Activated CD4-positive, alpha-beta T cell treated with anti-CD3 and anti-CD28 coated beads, Interleukin-2, amount 10 ng/mL, durations not matched to agents 7 days and 5 days (primary cell): ENCODE measurements at regions of chr19 and their contacts with region 1.

Region 1: DNA sequence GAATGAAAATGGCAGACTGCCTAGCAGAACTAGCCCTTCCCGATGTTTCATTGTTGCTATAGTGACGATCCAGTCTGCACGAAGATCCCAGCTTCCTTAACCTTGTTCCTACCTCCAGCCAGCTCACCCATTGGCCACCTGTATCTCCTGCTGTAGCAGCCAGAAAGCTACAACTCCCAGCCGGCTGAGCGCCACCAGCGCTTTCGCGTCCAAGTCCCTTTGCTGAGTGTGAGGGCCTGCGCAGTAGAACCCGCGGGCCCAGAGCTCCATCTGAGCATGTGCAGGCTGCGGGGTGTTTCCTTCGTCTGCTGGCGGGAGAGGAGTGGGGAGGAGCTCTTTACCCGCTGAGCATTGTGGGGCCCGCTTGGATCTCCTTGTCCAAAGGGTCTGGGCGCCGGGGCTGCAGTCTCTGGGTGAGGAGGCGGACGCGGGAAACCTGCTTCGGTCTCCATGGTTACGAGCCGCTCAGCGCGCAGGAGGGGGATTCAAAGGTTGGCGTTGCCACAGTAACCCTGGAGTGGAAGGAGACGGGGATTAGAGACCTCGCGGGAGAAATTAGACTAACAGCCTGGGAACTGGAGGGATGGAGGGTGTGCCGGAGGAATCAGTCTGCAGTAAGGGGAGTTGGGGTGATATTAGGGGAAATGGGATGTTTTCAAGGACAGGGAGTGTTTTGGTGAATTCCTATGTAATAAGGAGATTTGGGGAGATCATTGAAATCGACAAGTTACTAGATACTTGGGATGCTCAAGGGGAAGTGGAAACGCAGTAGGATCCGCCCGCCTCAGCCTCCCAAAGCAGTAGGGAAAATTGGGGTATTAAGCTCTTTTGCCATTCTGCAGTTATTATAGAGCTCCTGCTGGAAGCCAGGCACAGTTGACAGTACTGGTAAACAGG is 33.5 kb downstream of the ZSWIM9 start:
- DNase-seq: peak; percentile 95
- H3K4me3 Mint-ChIP-seq: no peak overlapping the region
- H3K27ac Mint-ChIP-seq: no peak overlapping the region
- H3K4me1 Mint-ChIP-seq: peaks cover 29% of the 10 kb centered on the region
- H3K27me3 Mint-ChIP-seq: no peaks in the 10 kb centered on the region

Region 2: DNA sequence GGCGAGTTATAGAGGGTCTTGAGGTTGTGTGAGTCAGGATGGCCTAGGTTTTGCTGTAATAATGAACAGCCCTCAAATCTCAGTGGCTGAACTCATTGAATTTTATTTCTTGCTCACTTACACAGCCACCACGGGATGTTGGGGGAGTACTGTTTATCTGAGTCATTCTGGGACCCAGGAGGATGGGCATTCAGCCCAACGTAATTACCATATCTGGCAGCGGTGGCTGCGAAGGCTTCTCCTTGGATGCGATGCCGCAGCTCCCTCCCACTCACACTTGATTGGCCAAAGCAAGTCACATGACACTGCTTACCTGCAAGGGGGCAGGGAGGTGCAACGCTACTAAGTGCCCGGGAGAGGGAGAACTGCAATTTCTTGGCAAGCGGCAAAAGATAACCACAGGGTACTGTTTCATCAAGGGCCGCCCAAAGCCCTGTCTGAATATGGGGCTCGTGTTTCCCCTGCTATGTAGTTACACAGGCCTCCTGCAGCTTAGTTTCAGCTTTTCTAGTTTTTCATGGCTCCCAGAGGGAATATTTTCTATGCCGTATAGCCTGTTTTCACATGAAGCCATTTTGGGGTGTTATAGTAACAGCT is 13.6 kb before region 1 on chr19:
- CTCF ChIA-PET with region 1: interaction called, 14 read pairs
- POLR2A ChIA-PET with region 1: no interaction called
- DNase-seq: no peak
- H3K4me3 Mint-ChIP-seq: no peak overlapping the region
- H3K27ac Mint-ChIP-seq: no peak overlapping the region
- H3K4me1 Mint-ChIP-seq: no peaks in the 10 kb centered on the region
- H3K27me3 Mint-ChIP-seq: no peaks in the 10 kb centered on the region